Ascending aorta (tissue), 2 donors: ENCODE measurements at regions of chr5 and their contacts with region 1.

Region 1: DNA sequence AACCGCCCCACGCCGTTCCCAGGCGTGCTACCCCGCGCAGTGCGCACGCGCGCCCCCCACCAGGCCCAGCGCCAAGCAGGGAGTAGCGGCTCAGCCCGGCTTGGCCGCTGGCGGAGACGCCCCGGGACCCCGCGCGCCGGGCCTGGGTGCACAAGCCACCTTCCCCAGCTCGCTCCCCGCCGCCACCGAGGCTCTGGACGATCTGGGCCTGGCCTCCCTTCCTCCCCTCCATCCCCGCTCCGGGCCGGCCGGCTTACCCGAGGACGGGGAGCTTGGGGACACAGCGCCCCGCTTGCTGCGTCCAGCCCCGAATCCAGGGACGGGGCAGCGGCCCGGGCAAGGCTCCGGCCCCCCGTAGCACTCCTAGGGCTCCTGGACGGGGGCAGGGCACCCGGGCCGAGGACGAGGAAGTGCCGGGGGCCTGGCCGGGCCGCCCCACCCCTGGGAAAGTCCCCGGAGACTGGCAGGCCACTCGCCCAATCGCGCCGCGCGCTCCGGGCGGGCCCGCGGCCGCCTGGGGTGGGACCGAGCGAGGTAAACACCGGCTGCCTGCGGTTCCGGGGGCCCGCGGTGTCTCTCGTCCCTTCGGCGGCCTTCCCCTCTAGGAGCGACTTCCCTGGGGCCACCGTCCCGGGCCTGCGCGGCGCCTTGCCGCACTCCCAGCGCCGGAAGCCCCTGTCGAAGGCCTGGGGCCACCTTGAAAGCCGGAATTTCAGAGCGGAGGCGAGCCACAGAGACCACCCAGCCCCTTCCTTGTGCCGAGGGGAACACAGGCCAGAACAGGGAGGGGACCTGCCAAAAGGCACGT is at the start of gene TNIP1:
- DNase-seq: peak; percentile 72 to 96
- H3K4me3 ChIP-seq: peak within 1 kb of the TSS; percentile 75 to 91
- H3K27ac ChIP-seq: peak within 1 kb of the TSS; percentile 94 to 97
- H3K4me1 ChIP-seq: peaks cover 7 to 30% of the 10 kb centered on the region in 2 donors
- H3K27me3 ChIP-seq: no peaks in the 10 kb centered on the region
- CTCF ChIP-seq: no peak
- total RNA-seq, gene TNIP1: 54.6 TPM

Region 2: DNA sequence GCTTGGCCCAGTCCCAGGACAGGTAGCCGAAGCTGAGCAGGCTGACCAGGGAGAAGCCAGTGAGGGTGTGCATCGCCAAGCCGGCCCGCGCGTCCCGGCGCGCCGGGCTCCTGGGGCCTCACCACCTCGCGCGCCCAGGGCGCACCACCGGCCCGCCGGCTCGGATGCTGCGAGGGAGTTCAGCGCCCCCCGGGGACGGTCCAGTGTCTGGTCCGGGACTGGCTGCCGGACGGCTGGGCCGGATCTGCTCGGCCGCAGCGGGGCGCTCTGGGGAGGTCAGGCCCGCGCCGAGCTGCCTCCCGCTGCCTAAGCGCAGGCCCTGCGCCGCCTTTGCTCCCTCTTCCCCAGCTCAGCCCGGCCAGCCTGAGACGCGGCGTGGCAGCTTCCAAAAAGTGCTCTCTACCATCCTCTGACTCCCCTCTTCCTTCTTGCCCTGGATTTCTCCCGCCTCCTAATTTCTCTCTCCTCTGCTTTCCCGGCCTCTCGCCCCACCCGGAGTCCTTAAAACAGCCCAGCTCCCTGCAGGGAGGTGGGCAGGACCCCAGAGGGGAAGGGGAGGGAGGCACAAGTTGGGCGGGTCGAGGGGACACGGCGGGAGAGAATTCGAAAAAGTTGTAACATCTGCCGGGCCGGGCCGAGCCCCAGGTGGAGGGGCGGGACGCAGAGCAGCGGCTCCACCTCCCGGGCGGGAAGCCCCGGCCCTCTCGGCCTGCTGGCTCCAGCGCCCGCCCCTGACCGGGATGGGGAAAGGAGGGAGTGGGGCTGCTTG is 778.3 kb before region 1 on chr5 and contains the start of gene ARSI:
- intact Hi-C with region 1: no loop called
- DNase-seq: no peak
- H3K4me3 ChIP-seq: peak within 1 kb of the TSS; percentile 46 to 60
- H3K27ac ChIP-seq: peak within 1 kb of the TSS; percentile 33 to 41
- H3K4me1 ChIP-seq: peaks cover 6 to 8% of the 10 kb centered on the region in 2 donors
- H3K27me3 ChIP-seq: no peaks in the 10 kb centered on the region
- CTCF ChIP-seq: peak in 1 of 3 experiments; percentile 31
- total RNA-seq, gene ARSI: not detected

Region 3: DNA sequence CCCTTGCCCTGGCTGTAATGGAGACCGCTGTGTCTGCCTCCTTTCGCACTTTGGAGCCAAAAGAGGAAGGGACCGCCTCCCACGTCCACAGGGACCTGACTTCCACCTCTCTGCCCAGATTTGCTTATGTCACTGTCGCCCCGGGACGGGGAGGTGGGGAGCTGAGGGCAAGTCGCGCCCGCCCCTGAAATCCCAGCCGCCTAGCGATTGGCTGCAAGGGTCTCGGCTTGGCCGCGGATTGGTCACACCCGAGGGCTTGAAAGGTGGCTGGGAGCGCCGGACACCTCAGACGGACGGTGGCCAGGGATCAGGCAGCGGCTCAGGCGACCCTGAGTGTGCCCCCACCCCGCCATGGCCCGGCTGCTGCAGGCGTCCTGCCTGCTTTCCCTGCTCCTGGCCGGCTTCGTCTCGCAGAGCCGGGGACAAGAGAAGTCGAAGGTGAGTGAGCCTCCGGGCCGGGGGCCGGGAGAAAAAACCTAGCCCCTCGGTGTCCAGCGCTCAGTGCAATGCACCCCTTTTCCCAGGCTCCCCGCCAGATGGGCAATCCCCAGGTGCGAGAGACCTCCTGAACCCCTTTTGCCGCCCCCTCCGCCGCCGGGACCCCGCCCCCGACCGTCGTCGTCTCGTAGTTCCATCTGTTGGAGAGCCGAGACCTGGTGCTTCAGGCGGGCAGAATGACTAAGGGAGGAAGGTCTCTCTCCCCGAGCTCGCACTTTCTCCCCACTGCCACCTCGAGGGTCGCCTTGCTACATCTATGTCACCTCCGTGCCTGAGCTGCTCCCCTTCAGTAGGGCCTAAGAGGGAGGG is 60.3 kb before region 1 on chr5 and contains the start of gene GPX3:
- intact Hi-C with region 1: loop called (anchors 5 kb)
- DNase-seq: peak; percentile 92 to 98
- H3K4me3 ChIP-seq: peak within 1 kb of the TSS; percentile 76 to 87
- H3K27ac ChIP-seq: peak within 1 kb of the TSS; percentile 91 to 93
- H3K4me1 ChIP-seq: peaks cover 23 to 36% of the 10 kb centered on the region in 2 donors
- H3K27me3 ChIP-seq: no peaks in the 10 kb centered on the region
- CTCF ChIP-seq: no peak
- total RNA-seq, gene GPX3: 2,056 TPM

Region 4: DNA sequence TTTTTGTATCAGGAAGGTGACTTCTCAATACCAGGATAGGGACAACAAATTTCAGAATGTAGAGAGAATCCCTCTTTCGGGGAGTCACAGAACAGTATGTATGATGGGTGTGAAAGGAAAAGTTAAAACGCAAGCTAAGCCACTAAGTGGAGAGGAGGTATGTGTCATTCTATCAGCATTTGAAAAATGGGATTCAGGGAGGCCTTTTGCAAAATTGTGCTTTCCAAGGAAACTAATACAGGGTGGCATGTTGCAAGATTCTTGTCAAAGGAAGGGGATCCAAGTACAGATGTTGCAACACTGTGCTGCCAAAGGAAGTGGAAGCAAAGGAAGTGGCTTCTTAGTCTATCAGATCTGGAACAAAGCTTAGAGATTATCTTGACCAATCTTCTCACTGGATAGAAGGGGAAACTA is 12.7 kb after region 1 on chr5:
- intact Hi-C with region 1: loop called (anchors 1 kb)
- DNase-seq: peak in 1 of 2 donors; percentile 84
- H3K4me3 ChIP-seq: no peak overlapping the region
- H3K27ac ChIP-seq: peak overlapping the region; percentile 77 to 85
- H3K4me1 ChIP-seq: peaks cover 19 to 31% of the 10 kb centered on the region in 2 donors
- H3K27me3 ChIP-seq: no peaks in the 10 kb centered on the region
- CTCF ChIP-seq: no peak